SK-N-SH (cell line): ENCODE measurements at regions of chr4 and their contacts with region 1.

Region 1: GRCh38 chr4:26866781-26867180 is 6.1 kb downstream of the STIM2 start:
- DNase-seq: no peak
- H3K4me3 ChIP-seq: no peak overlapping the region
- H3K27ac ChIP-seq: no peak overlapping the region
- H3K4me1 ChIP-seq: peaks cover 9 to 15% of the 10 kb centered on the region in 2 experiments; a peak in 3 of 4 replicates
- H3K27me3 ChIP-seq: no peaks in the 10 kb centered on the region
- CTCF ChIP-seq: no peak
- EP300 ChIP-seq: no peak
- RAD21 ChIP-seq: no peak

Region 2: GRCh38 chr4:26877961-26878360 is 11.2 kb after region 1 on chr4:
- CTCF ChIA-PET with region 1: no interaction called
- POLR2A ChIA-PET with region 1: no interaction called
- DNase-seq: no peak
- H3K4me3 ChIP-seq: no peak overlapping the region
- H3K27ac ChIP-seq: no peak overlapping the region
- H3K4me1 ChIP-seq: no peaks in the 10 kb centered on the region; a peak in 1 of 4 replicates
- H3K27me3 ChIP-seq: no peaks in the 10 kb centered on the region
- CTCF ChIP-seq: no peak
- EP300 ChIP-seq: no peak
- RAD21 ChIP-seq: no peak

Region 3: GRCh38 chr4:26964512-26964911 is 97.7 kb after region 1 on chr4:
- CTCF ChIA-PET with region 1: no interaction called
- POLR2A ChIA-PET with region 1: no interaction called
- DNase-seq: no peak
- H3K4me3 ChIP-seq: no peak overlapping the region
- H3K27ac ChIP-seq: no peak overlapping the region; a peak in 1 of 4 replicates
- H3K4me1 ChIP-seq: peaks cover 0 to 7% of the 10 kb centered on the region in 2 experiments; a peak in 3 of 4 replicates
- H3K27me3 ChIP-seq: no peaks in the 10 kb centered on the region
- CTCF ChIP-seq: no peak
- EP300 ChIP-seq: no peak
- RAD21 ChIP-seq: no peak

Region 4: DNA sequence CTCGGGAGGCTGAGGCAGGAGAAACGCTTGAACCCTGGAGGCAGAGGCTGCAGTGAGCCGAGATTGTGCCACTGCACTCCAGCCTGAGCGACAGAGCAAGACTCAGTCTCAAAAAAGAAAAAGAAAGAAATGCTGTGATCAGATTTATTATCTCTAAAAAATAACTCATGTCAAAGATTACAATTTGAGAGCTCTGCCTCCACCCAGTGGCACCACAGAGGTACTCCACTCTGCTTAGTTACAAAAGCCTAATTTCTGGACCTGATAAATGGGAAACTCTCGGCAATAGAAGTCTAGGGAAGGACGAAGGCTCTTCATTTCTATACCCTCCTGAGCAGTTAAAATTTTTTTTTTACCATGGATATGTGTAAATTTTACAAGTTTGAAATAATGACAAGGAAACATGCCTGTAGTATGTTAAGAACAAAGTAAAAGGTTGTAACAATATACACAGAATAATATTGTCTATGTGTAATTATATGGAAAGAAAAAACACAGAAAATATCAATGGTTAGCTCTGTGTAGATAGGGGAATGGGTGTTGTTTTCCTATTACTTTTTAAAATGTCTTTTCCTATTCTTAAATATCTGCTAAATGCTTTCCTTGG is 143.7 kb after region 1 on chr4:
- CTCF ChIA-PET with region 1: interaction called, 12 read pairs
- POLR2A ChIA-PET with region 1: no interaction called
- DNase-seq: peak; percentile 54
- H3K4me3 ChIP-seq: peak overlapping the region in 1 of 2 experiments; percentile 39; a peak in 1 of 4 replicates
- H3K27ac ChIP-seq: no peak overlapping the region
- H3K4me1 ChIP-seq: peaks cover 0 to 31% of the 10 kb centered on the region in 2 experiments; a peak in 3 of 4 replicates
- H3K27me3 ChIP-seq: no peaks in the 10 kb centered on the region
- CTCF ChIP-seq: peak; percentile 94
- EP300 ChIP-seq: no peak
- RAD21 ChIP-seq: peak; percentile 93